Activated CD8-positive, alpha-beta memory T cell treated with anti-CD3 and anti-CD28 coated beads, Interleukin-2, amount 10 ng/mL, durations not matched to agents 7 days and 5 days (primary cell): ENCODE measurements at regions of chr6 and their contacts with region 1.

Region 1: DNA sequence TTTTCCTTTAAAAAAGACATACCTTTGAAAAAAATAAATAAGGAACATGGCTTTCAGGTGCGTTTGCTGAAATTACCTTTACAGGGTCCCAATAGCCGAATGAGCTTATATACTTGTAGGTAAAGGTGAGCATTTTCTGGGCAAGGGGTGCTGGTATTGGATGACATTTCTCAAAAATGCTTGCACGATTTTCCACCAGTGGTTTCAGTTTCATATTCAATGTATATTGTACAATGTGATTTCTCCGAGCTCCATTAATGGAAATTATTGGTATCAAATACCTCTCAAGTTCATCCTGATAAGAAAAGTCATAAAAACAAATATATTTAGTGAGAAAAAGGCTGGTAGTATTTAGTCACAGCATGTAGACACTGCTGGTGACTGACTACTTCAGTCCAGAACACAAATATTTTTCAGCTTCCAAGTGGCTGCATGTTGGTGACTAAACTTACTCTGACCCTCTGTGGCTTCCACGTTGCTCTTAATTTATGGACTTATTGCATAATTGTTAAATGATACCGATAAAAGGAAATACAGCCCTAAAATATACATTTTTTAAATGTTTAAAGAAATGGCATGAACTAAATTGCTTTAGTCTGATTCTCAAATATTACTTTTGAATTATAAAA is 32.9 kb upstream of the ZBTB24 start:
- DNase-seq: no peak
- ATAC-seq: peak; percentile 76
- H3K4me3 Mint-ChIP-seq: peak overlapping the region; percentile 67
- H3K27ac Mint-ChIP-seq: peak overlapping the region; percentile 64
- H3K4me1 Mint-ChIP-seq: peaks cover 28% of the 10 kb centered on the region
- H3K27me3 Mint-ChIP-seq: no peaks in the 10 kb centered on the region

Region 2: GRCh38 chr6:109491207-109491938 is 24.5 kb before region 1 on chr6:
- CTCF ChIA-PET with region 1: interaction called, 10 read pairs
- DNase-seq: peak; percentile 70
- ATAC-seq: peak; percentile 99
- H3K4me3 Mint-ChIP-seq: peak overlapping the region; percentile 57
- H3K27ac Mint-ChIP-seq: peak overlapping the region; percentile 91
- H3K4me1 Mint-ChIP-seq: peaks cover 34% of the 10 kb centered on the region
- H3K27me3 Mint-ChIP-seq: peaks cover 5% of the 10 kb centered on the region